ENCODE measurements at regions of chr14 and their contacts with region 1.

Region 1: GRCh38 chr14:39102969-39103957 is at the start of gene SEC23A:
- DNase-seq: peak; percentile 96
- total RNA-seq, gene SEC23A: 90.9 TPM

Region 2: DNA sequence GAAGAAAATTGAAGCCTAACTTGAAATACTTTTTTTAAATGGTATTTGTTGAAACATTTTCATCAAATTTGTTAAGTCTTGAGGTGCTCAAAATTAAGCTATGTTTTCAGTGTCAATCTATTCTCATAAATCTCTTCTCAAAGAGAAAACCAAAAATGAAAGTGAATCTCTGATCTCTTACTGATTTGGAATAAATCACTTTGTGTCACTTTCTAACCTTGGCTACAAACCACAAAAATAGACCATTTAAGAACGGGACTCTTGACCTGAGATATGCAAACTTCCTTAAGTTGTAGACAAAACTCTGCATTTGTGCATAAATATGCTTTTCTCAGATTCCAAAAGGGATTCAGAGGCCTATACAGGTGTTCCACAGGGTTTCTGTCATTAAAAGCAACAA is 193.2 kb before region 1 on chr14:
- intact Hi-C with region 1: no loop called
- DNase-seq: no peak

Region 3: DNA sequence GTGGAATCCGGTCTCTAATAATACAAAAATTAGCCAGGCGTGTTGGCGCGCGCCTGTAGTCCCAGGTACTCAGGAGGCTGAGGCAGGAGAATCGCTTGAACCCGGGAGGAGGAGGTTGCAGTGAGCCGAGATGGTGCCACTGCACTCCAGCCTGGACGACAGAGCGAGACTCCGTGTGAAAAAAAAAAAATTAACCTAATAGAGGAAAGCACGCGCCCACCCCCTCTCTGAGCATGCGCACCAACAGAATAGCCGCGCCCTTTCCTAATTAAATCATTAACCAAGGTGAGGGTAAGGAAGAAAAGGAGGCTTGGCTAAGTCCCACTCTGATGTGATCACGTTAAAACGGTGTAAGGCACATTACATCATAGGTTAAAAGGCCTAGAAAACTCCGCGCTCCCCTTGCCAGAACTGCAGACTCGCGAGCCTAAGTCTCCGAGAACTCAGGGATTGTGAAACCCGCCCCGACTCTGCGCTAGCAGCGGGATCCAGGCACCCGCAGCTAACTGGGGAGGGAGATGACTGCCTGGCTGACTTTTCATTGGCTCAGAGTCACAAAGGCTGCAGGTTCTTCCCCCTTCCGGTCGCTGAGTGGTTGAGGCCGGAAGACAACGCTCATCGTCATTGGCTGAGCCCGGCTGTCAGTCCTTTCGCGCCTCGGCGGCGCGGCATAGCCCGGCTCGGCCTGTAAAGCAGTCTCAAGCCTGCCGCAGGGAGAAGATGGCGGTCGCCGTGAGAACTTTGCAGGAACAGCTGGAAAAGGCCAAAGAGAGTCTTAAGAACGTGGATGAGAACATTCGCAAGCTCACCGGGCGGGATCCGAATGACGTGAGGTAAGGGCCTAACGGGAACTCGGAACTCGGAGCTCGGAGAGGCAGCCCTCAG is 71.5 kb after region 1 on chr14 and contains the start of gene PNN:
- intact Hi-C with region 1: loop called (anchors 5 kb)
- DNase-seq: peak; percentile 99
- total RNA-seq, gene PNN: 30.0 TPM

Region 4: GRCh38 chr14:39368261-39368959 is 265.1 kb after region 1 on chr14:
- intact Hi-C with region 1: loop called (anchors 5 kb)
- DNase-seq: no peak

Region 5: DNA sequence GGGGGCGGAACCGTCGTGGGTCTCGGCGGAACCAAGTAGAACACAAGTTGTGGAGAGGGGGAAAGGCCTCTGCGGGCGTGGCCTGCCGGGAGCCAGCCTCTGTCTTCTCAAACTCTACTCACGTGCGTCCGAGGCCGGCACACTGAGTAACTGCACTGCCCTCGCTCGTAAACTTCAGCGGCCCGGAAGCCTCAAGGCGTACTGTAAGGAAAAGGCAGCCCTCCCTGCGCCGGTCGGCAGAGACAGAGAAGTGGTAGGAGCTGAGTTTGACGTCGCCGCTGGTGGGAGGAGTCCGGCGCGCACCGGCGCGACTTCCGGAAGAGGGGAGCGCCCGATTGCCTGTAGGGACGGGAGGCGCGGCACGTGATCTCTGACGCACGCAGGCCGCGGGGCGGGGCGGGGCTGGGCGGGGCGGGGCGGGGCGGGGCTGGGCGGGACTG is 328.9 kb after region 1 on chr14 and contains the start of gene FBXO33:
- intact Hi-C with region 1: loop called (anchors 5 kb)
- DNase-seq: peak; percentile 99
- total RNA-seq, gene FBXO33: 6.3 TPM